Dorsolateral prefrontal cortex (tissue), 120 donors: ENCODE measurements at regions of chr1 and their contacts with region 1.

Region 1: GRCh38 chr1:204059970-204060369 is 12.9 kb upstream of the SOX13 start:
- DNase-seq: no peak
- H3K4me3 ChIP-seq: no peak overlapping the region
- H3K27ac ChIP-seq: no peak overlapping the region
- H3K27me3 ChIP-seq: no peaks in the 10 kb centered on the region
- CTCF ChIP-seq: no peak

Region 2: DNA sequence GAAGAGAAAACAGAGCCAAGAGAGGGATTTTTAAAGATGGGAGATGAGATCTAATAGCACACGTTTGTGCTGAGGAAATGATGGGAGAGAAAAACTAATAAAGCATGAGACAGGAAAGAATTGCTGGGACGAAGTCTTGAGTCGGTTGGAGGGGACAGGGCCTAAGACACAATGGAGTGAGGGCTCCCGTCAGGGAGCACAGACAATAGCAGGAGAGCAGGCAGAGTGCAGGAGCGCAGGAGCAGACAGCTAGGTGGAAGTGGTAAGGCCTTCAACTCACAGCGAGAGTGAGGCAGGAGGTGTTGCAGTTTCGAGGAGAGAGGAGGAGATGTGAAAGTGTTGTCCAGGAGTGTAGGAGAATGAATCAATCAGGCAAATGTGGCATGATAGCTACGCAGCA is 46.9 kb before region 1 on chr1:
- intact Hi-C with region 1: loop called in 1 of 2 experiments (anchors 5 kb)
- DNase-seq: no peak
- H3K4me3 ChIP-seq: no peak overlapping the region
- H3K27ac ChIP-seq: no peak overlapping the region
- H3K27me3 ChIP-seq: no peaks in the 10 kb centered on the region
- CTCF ChIP-seq: no peak